ENCODE measurements at regions of chr10 and their contacts with region 1.

Region 1: DNA sequence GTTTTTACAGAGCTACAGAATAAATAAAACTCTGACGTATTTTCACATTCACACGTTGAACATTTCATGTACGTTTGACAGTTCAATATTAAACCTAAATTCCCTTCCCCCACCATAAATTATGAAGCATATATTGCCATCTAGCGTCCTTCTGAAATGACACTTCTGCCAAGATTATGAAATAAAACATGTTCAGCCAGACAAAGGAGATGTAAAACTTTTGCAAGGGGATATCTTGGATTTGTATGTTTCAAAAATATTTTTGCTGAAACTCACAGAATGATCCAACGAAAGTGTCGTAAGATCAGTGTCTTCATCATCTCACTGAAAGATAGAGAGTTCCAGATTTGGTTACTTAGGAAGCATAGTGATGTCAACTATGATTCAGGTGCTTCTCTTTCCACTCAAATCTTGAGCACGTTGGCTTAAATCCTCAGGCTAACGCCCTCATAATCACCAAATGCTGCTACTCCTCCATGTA is 904.3 kb downstream of the XPNPEP1 start:
- DNase-seq: peak; percentile 0
- ATAC-seq: no peak
- H3K4me3 ChIP-seq: no peak overlapping the region
- H3K27ac ChIP-seq: no peak overlapping the region
- H3K4me1 ChIP-seq: no peaks in the 10 kb centered on the region
- H3K27me3 ChIP-seq: no peaks in the 10 kb centered on the region; the same call in 1 of the 2 replicates
- CTCF ChIP-seq: peak; percentile 28; the same call in 1 of the 2 replicates

Region 2: DNA sequence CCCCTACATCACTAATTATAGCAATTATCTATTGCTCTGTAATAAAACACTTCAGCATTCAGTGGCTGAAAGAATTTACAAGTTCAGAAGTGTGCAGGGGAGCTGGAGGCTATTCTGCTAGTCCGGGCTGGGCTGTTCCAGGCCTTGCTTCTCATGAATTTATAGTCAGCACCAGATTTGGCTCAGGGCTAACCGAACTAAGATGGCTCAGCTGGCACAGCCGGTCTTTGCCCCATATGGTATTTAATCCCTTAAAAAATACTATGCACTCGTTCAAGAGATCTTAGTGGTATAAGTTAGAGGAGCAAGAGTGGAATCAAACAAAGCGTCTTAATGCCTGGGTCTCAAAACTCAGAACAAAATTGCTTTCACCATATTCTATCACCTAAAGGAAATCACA is 28.5 kb before region 1 on chr10:
- CTCF ChIA-PET with region 1: no interaction called
- POLR2A ChIA-PET with region 1: no interaction called
- in situ Hi-C with region 1: no loop called
- intact Hi-C with region 1: no loop called
- DNase-seq: no peak
- ATAC-seq: no peak
- H3K4me3 ChIP-seq: no peak overlapping the region
- H3K27ac ChIP-seq: no peak overlapping the region
- H3K4me1 ChIP-seq: no peaks in the 10 kb centered on the region
- H3K27me3 ChIP-seq: no peaks in the 10 kb centered on the region
- CTCF ChIP-seq: no peak

Region 3: GRCh38 chr10:109166935-109167334 is 148.0 kb after region 1 on chr10:
- CTCF ChIA-PET with region 1: no interaction called
- POLR2A ChIA-PET with region 1: no interaction called
- in situ Hi-C with region 1: no loop called
- intact Hi-C with region 1: no loop called
- DNase-seq: no peak
- ATAC-seq: no peak
- H3K4me3 ChIP-seq: no peak overlapping the region
- H3K27ac ChIP-seq: no peak overlapping the region
- H3K4me1 ChIP-seq: no peaks in the 10 kb centered on the region
- H3K27me3 ChIP-seq: no peaks in the 10 kb centered on the region
- CTCF ChIP-seq: no peak

Region 4: GRCh38 chr10:109343293-109343692 is 324.3 kb after region 1 on chr10:
- CTCF ChIA-PET with region 1: interaction called, 11 read pairs
- POLR2A ChIA-PET with region 1: no interaction called
- in situ Hi-C with region 1: no loop called
- intact Hi-C with region 1: no loop called
- DNase-seq: no peak
- ATAC-seq: no peak
- H3K4me3 ChIP-seq: no peak overlapping the region
- H3K27ac ChIP-seq: no peak overlapping the region
- H3K4me1 ChIP-seq: no peaks in the 10 kb centered on the region
- H3K27me3 ChIP-seq: no peaks in the 10 kb centered on the region
- CTCF ChIP-seq: no peak

Measured in Panc1 (cell line).